Ascending aorta (tissue), 2 donors: ENCODE measurements at regions of chr14 and their contacts with region 1.

Region 1: DNA sequence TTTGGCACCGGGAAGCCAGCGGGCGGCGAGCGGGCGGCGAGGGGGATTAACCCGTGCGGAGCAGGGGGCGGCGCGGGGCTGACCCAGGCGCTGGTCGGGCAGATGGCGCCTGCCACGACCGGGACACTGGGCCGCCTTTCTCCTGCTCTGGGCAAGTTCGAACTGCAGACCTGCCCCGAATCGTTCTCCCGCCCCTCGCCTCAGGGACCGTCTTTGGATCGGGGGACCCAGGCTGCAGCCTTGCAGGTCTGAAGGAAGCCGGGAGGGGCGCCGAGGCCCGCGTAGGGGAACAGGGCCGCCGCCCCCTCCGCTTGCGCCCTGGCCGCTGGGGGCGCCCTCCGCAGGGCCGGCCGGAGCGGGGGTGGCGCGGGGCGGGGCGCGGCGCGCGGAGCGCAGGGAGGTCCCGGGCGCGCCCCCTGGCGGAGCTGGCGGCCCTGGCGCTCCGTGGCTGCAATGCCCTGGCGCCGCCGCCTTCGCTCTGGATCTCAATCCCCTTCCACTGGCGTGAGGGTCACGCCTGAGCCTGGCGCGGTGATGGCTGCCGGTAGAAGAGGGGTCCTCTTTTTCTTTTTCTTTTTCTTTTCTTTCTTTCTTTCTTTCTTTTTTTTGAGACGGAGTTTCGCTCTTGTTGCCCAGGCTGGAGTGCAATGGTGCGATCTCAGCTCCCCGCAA is 449 bp upstream of the LTBP2 start:
- DNase-seq: peak in 1 of 2 donors; percentile 92
- H3K4me3 ChIP-seq: peak overlapping the region; percentile 53 to 96
- H3K27ac ChIP-seq: peak overlapping the region; percentile 93 to 97
- H3K4me1 ChIP-seq: peaks cover 20 to 47% of the 10 kb centered on the region in 2 donors
- H3K27me3 ChIP-seq: no peaks in the 10 kb centered on the region
- CTCF ChIP-seq: peak; percentile 61 to 98 (median 69)

Region 2: DNA sequence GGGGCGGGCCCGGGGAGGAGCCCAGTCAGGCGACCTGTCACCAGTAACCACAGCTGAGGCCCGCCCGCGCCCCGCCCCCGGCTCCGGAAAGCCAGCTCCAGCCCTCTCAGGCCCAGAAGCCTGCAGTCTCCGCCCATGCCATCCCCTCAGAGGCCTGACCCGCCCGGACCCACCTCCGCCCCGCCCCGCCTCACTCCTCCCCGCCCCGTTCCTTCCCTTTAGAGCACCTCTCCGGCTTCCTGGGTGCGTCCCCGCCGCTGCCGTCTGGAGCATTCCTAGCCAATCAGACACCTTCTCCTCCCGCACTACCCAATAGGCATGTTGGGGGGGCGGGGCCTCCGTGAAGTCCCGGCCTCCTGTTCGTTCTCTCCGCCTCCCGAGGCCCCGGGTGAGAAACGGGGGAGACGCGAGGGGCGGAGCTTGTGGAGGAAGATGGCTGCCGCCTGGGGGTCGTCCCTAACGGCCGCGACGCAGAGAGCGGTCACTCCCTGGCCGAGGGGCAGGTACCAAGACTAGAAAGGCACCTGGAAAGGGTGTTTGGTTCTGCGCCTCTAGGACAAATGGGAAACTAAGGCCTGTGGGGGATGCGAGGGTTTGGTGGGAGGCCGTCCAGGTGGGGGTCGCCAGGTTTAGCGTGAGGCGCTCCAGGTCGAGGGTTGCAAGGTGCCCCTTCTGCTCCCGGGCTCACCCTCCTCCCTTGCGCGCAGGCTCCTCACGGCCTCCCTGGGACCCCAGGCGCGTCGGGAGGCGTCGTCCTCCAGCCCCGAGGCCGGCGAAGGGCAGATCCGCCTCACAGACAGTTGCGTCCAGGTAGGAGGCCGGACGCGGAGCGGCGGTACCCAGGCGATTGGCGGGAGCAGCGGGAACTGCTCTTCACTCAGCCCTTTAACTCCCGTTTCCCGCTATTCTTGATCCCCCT is 118.9 kb before region 1 on chr14 and contains the start of gene ISCA2:
- intact Hi-C with region 1: loop called (anchors 5 kb)
- DNase-seq: peak; percentile 99 to 100
- H3K4me3 ChIP-seq: peak within 1 kb of the TSS; percentile 91 to 93
- H3K27ac ChIP-seq: peak within 1 kb of the TSS; percentile 94 to 95
- H3K4me1 ChIP-seq: peaks cover 0 to 7% of the 10 kb centered on the region in 2 donors
- H3K27me3 ChIP-seq: no peaks in the 10 kb centered on the region
- CTCF ChIP-seq: no peak
- total RNA-seq, gene ISCA2: 10.0 TPM

Region 3: GRCh38 chr14:74645244-74645643 is 32.8 kb after region 1 on chr14:
- intact Hi-C with region 1: loop called (anchors 2 kb)
- DNase-seq: no peak
- H3K4me3 ChIP-seq: no peak overlapping the region
- H3K27ac ChIP-seq: peak overlapping the region; percentile 65 to 84
- H3K4me1 ChIP-seq: peaks cover 29 to 62% of the 10 kb centered on the region in 2 donors
- H3K27me3 ChIP-seq: no peaks in the 10 kb centered on the region
- CTCF ChIP-seq: no peak

Region 4: DNA sequence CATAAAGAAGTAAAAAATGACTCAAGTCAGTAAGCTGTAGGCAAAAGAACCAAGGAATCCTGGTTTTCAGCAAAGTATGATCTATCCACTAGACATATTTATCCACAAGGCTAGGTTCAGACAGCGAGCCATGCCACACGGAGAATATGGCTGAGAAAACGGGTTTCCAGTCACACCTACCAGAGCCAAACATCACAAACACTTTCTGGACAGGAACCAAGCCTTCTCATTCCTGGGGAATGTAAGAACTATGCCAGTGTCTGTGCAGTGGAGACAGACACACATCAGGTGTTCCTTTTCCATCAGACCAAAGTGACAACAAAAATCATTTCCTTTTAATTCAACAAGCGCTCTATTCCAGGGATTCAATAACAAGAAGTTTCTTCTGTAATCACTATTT is 59.3 kb after region 1 on chr14:
- intact Hi-C with region 1: loop called (anchors 2 kb)
- DNase-seq: peak in 1 of 2 donors; percentile 77
- H3K4me3 ChIP-seq: no peak overlapping the region
- H3K27ac ChIP-seq: peak overlapping the region; percentile 78 to 87
- H3K4me1 ChIP-seq: peaks cover 3 to 15% of the 10 kb centered on the region in 2 donors
- H3K27me3 ChIP-seq: no peaks in the 10 kb centered on the region
- CTCF ChIP-seq: no peak

Region 5: GRCh38 chr14:74762917-74763802 is 150.7 kb after region 1 on chr14 and contains the start of gene YLPM1:
- intact Hi-C with region 1: loop called (anchors 2 kb)
- DNase-seq: peak; percentile 66 to 96
- H3K4me3 ChIP-seq: peak within 1 kb of the TSS; percentile 73 to 100
- H3K27ac ChIP-seq: peak within 1 kb of the TSS; percentile 70 to 94
- H3K4me1 ChIP-seq: peaks cover 0 to 10% of the 10 kb centered on the region in 2 donors
- H3K27me3 ChIP-seq: no peaks in the 10 kb centered on the region
- CTCF ChIP-seq: peak; percentile 30 to 61 (median 50)
- total RNA-seq, gene YLPM1: 27.7 TPM

Region 6: GRCh38 chr14:74881431-74882361 is 269.2 kb after region 1 on chr14 and contains the start of gene DLST:
- intact Hi-C with region 1: loop called (anchors 10 kb)
- DNase-seq: peak; percentile 29 to 90
- H3K4me3 ChIP-seq: peak within 1 kb of the TSS; percentile 87 to 95
- H3K27ac ChIP-seq: peak within 1 kb of the TSS; percentile 86 to 97
- H3K4me1 ChIP-seq: peaks cover 3 to 37% of the 10 kb centered on the region in 2 donors
- H3K27me3 ChIP-seq: no peaks in the 10 kb centered on the region
- CTCF ChIP-seq: peak in 1 of 3 experiments; percentile 18
- total RNA-seq, gene DLST: 59.7 TPM